Activated CD4-positive, alpha-beta memory T cell treated with anti-CD3 and anti-CD28 coated beads for 36 hours (primary cell): ENCODE measurements at regions of chr1 and their contacts with region 1.

Region 1: DNA sequence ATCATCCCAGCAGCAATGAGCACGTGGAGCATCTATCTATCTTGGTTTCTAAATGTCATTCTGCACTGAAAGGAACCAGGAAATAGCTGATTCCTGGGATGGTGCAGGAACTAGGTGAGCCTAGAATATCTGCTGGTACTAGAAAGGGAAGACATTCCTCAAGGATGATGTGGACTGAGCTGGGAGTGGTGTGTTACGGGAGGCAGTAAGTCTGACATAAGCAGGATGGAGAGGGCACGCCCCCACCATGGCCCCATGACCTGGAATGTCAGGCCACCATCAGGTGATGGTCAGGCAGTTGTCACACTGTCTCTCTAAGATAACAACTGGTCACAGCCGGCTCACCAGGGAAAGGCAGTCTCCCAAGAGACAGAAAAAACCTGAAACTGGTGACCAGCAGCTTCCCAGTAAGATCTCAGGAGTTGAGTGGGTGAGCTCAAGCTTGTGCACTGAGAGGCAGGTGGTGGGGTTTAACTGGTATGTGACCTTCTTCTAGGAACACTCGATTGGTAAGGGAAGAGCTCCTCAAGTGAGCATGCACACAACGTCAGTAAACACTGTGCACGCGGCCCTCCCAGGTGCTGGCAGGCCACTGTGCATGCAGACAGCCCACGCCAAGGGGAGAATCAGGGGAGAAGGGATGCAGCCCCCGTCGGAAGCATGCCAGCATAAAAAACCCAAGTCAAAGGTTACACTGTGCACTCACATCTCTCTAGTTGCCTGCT is 148.7 kb downstream of the ADSS2 start:
- DNase-seq: no peak
- H3K4me3 Mint-ChIP-seq: no peak overlapping the region
- H3K27ac Mint-ChIP-seq: no peak overlapping the region
- H3K4me1 Mint-ChIP-seq: peaks cover 5% of the 10 kb centered on the region
- H3K27me3 Mint-ChIP-seq: no peaks in the 10 kb centered on the region

Region 2: DNA sequence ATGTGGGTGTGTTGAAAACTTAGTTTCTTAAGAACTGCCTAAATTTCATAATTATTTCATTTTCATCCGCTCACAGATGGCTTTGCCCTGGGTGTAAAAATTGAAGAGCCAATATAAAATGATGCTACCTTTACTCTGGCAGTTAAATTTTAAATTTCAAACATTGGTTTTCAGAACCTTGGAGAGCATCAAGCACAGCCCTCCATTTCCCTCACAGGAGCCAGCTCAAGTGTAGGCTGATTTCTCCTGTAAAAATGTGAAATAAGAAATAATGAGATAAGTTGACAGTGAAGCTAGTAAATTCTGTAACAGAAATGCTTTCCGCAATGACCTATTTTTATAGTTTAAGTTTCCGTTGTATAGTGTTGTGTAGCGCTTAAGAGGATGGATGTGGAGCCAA is 399.2 kb before region 1 on chr1:
- CTCF ChIA-PET with region 1: no interaction called
- POLR2A ChIA-PET with region 1: no interaction called
- intact Hi-C with region 1: no loop called
- DNase-seq: no peak
- H3K4me3 Mint-ChIP-seq: no peak overlapping the region
- H3K27ac Mint-ChIP-seq: no peak overlapping the region
- H3K4me1 Mint-ChIP-seq: no peaks in the 10 kb centered on the region
- H3K27me3 Mint-ChIP-seq: peaks cover 4% of the 10 kb centered on the region

Region 3: DNA sequence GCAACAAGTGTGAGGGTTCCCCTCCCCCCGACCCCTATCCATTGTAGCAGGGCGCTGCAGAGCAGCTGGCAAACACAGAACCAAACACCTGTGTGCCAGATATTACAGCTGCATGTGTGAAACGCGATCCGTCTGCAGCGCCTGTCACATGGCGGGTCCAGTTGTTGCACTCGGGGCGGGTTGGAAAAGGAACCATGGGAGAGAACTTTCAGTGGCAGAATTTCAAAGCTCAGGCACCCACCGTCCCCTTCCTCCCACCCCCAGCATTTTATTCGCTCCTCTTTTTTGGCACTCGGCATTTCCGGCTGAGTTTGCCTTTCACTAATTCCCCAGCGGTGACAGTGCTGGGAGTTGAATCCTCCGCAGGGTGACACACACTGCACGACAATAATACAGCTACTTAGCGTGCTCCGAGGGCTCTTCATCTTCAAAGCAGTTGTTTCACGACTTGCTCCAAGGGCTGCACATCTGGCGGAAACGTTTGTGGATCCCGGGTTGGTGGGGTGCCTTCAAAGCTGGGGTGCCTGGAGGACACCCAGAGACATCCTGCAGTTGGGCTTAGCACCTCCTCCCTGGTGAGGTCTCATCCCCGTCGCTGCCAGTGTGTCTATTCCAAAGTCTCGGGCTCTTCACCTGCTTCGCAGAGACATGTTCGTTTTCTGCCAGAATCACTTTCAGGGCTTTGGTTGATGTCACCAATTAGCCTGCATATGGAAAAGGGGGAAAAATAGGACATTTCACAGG is 71.3 kb before region 1 on chr1:
- CTCF ChIA-PET with region 1: no interaction called
- POLR2A ChIA-PET with region 1: no interaction called
- intact Hi-C with region 1: no loop called
- DNase-seq: no peak
- H3K4me3 Mint-ChIP-seq: peak overlapping the region; percentile 6
- H3K27ac Mint-ChIP-seq: no peak overlapping the region
- H3K4me1 Mint-ChIP-seq: no peaks in the 10 kb centered on the region
- H3K27me3 Mint-ChIP-seq: peaks cover 5% of the 10 kb centered on the region

Region 4: GRCh38 chr1:244289976-244290375 is 13.1 kb before region 1 on chr1:
- CTCF ChIA-PET with region 1: interaction called, 11 read pairs
- POLR2A ChIA-PET with region 1: no interaction called
- intact Hi-C with region 1: no loop called
- DNase-seq: no peak
- H3K4me3 Mint-ChIP-seq: no peak overlapping the region
- H3K27ac Mint-ChIP-seq: no peak overlapping the region
- H3K4me1 Mint-ChIP-seq: peaks cover 3% of the 10 kb centered on the region
- H3K27me3 Mint-ChIP-seq: peaks cover 17% of the 10 kb centered on the region

Region 5: GRCh38 chr1:244552340-244552739 is 249.3 kb after region 1 on chr1:
- CTCF ChIA-PET with region 1: no interaction called
- POLR2A ChIA-PET with region 1: no interaction called
- intact Hi-C with region 1: no loop called
- DNase-seq: no peak
- H3K4me3 Mint-ChIP-seq: no peak overlapping the region
- H3K27ac Mint-ChIP-seq: no peak overlapping the region
- H3K4me1 Mint-ChIP-seq: no peaks in the 10 kb centered on the region
- H3K27me3 Mint-ChIP-seq: no peaks in the 10 kb centered on the region

Region 6: DNA sequence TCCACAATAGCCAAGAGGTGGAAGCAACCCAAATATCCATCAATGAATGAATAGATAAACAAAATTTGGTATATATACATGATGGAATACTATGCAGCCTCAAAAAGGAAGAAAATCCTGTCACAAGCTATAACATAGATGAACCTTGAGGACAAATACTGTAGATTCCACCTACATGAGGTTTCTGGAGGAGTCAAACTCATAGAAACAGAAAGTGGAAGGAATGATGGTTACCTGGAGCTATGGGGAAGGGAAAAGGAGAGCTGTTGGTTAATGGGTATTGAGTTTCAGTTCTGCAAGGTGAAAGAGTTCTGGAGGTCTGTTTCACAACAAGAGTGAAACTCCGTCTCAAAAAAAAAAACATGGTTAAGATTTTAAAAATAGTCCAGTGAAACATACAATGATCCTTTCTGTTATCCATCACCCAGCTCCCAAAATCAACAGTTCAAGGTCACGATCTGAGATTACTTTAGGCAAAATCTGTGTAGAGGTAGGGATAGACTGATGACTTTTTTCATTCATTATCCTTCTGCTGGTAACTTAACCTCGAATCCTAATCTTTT is 642.1 kb after region 1 on chr1:
- CTCF ChIA-PET with region 1: no interaction called
- POLR2A ChIA-PET with region 1: no interaction called
- intact Hi-C with region 1: no loop called
- DNase-seq: no peak
- H3K4me3 Mint-ChIP-seq: no peak overlapping the region
- H3K27ac Mint-ChIP-seq: no peak overlapping the region
- H3K4me1 Mint-ChIP-seq: no peaks in the 10 kb centered on the region
- H3K27me3 Mint-ChIP-seq: no peaks in the 10 kb centered on the region